ENCODE measurements at regions of chr2 and their contacts with region 1.

Region 1: GRCh38 chr2:201860636-201861066 is 54.3 kb downstream of the CDK15 start:
- DNase-seq: no peak
- ATAC-seq: peak; percentile 84

Region 2: DNA sequence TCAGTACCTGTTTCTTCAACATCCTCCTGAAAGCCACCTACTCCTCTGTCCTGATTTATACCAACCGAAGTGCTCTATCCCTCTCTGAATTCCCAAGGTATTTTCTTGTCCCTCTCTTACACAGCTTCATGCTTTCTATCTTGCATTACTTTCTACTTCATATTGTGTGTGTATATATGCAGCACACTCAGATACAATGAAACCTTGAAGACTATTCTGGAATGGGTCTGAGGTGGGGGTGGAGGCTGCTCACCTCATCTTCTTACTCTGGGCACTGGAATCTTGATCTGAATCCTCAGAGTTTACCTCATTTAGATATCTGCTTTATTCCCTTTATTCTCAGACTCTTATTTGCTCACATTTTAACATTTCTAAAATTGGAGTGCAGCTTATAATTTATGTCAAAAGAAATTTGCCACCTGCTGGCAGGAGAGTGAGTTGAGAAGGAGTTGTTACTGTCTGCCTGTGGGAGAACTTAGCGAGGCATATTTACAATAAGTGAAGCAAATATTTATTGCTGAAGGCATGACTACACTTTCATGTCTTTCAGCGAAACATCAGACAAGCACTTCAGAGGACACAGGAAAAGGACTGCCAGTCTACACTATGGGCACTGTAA is 195.8 kb after region 1 on chr2:
- intact Hi-C with region 1: loop called (anchors 5 kb)
- DNase-seq: no peak
- ATAC-seq: no peak

Region 3: DNA sequence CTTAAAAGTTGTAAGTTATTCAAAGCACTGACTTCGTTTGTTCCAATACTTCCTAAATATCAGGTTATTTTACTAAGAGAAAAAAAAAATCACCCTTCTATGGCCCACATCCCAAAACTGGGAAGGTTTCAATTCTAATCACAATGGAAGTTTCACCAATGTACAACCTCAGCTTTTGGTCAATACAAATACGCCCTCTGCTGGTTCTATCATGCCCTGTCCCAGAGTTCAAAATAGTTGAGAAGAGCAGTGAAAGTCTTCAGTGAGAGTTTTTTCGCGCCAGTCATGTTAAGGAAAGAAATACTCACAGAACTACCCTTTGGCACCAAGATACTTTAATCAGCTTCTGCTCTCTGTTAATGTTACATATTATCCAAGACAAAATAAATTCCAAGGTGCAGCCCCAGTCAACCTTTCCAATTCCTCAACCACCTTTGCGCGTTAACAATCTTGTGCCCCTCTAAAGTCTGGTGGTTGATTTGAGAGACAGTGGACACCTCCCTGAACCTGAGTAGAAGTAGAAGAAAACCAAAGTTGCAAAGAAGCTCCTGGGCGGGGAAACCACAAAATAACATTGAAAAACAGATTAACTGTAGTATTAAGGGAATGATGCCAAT is 317.8 kb after region 1 on chr2:
- intact Hi-C with region 1: loop called (anchors 1 kb)
- DNase-seq: no peak
- ATAC-seq: peak; percentile 72